SK-N-SH (cell line): ENCODE measurements at regions of chr11 and their contacts with region 1.

Region 1: DNA sequence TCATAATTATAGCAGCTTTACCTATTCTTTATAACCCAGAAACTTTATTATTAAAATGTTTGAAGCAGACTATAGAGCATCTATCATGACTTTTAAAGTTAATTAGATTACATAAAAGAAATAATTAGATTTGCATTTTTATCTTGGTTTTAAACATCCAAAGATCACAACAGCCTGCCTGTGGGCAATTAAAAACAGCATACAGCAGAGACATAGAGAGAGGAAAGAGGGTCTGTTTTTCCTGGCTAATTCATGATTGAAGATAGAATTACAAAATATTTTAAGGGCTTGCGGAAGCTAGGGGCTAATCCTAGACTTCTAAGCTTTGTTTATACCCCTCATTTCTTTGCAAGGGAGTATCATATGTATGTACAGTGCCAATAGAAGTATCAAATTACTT is 178.1 kb downstream of the SOX6 start:
- DNase-seq: peak; percentile 32
- H3K4me3 ChIP-seq: no peak overlapping the region
- H3K27ac ChIP-seq: peak overlapping the region in 1 of 2 experiments; percentile 69; a peak in 1 of 4 replicates
- H3K4me1 ChIP-seq: peaks cover 5 to 7% of the 10 kb centered on the region in 2 experiments; a peak in 3 of 4 replicates
- H3K27me3 ChIP-seq: no peaks in the 10 kb centered on the region
- CTCF ChIP-seq: no peak
- EP300 ChIP-seq: peak in 1 of 2 experiments; percentile 88; a peak in 2 of 4 replicates
- RAD21 ChIP-seq: 0 out of 2 replicates have a peak, but pooled peaks have one; percentile 28

Region 2: DNA sequence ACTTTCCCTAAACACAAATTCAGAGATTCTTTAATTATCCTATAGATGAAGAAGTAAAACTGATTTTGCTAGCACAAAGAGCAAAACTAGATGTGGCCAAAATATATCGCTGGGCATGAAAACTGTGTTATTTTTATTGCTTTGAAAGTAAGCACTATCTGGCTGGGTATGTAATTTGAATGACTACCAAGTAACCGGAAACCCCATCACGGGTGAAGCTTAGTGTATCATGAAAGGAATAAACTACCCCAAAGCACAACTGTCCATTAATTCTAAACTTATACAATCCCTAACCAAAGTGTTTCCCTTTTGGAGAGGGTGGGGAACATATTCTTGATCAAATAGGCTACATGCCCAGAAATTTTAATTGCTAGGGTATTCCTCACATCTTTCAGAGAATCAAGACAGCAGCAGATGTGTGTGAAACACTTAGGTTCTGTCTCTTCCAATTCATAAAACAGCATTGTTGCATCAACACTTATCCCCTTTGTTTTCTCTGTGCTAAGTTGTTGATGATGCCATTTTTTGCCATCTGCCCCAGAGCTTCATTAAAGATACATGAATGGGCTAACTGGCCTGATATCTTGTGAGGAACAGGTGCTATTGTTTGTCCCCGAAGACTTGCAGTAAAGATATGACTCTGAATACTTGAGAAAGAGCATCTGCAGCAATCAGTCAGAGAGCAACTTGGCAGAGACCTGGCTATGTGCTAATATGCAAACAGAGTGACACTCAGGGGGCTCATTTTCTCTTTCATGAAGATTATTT is 60.1 kb before region 1 on chr11:
- CTCF ChIA-PET with region 1: no interaction called
- POLR2A ChIA-PET with region 1: no interaction called
- DNase-seq: no peak
- H3K4me3 ChIP-seq: no peak overlapping the region
- H3K27ac ChIP-seq: no peak overlapping the region
- H3K4me1 ChIP-seq: peaks cover 0 to 3% of the 10 kb centered on the region in 2 experiments; a peak in 1 of 4 replicates
- H3K27me3 ChIP-seq: no peaks in the 10 kb centered on the region
- CTCF ChIP-seq: no peak
- EP300 ChIP-seq: no peak
- RAD21 ChIP-seq: no peak

Region 3: GRCh38 chr11:16155448-16155847 is 22.8 kb before region 1 on chr11:
- CTCF ChIA-PET with region 1: no interaction called
- POLR2A ChIA-PET with region 1: no interaction called
- DNase-seq: no peak
- H3K4me3 ChIP-seq: no peak overlapping the region
- H3K27ac ChIP-seq: no peak overlapping the region
- H3K4me1 ChIP-seq: peaks cover 0 to 4% of the 10 kb centered on the region in 2 experiments; a peak in 3 of 4 replicates
- H3K27me3 ChIP-seq: no peaks in the 10 kb centered on the region
- CTCF ChIP-seq: no peak
- EP300 ChIP-seq: no peak
- RAD21 ChIP-seq: no peak

Region 4: DNA sequence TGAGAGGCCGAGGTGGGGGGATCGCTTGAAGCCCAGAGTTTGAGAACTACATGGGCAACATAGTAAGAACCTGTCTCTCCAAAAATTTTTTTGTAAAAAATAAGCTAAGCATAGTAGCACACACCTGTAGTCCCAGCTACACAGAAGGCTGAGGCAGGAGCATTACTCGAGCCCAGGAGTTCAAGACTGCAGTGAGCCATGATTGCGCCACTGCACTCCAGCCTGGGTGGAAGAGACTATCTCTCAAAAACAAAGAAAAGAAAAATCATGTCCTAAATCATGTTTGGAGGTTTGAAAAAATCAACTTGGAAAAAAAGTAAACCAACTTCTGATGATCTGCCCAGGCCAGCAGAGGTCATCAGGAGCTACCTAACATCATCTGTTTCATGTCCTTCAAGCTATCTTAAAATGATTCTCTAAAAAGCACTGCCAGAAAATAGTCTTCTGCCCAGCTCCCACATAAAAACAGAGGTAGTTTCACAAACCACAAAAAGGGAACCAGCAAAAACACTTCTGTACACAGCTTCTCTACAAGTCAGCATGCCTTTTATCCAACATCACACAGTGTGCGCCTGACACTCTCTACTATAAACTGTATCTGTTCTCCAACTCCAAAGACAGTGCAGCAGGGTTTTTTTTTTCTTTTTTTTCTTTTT is 13.1 kb after region 1 on chr11:
- CTCF ChIA-PET with region 1: interaction called, 11 read pairs
- POLR2A ChIA-PET with region 1: no interaction called
- DNase-seq: no peak
- H3K4me3 ChIP-seq: no peak overlapping the region
- H3K27ac ChIP-seq: no peak overlapping the region; a peak in 1 of 4 replicates
- H3K4me1 ChIP-seq: peaks cover 0 to 5% of the 10 kb centered on the region in 2 experiments; a peak in 2 of 4 replicates
- H3K27me3 ChIP-seq: no peaks in the 10 kb centered on the region
- CTCF ChIP-seq: peak; percentile 21; the same call in 1 of the 2 replicates
- EP300 ChIP-seq: no peak
- RAD21 ChIP-seq: peak; percentile 36; the same call in 1 of the 2 replicates

Region 5: GRCh38 chr11:16204261-16204660 is 26.0 kb after region 1 on chr11:
- CTCF ChIA-PET with region 1: no interaction called
- POLR2A ChIA-PET with region 1: no interaction called
- DNase-seq: no peak
- H3K4me3 ChIP-seq: no peak overlapping the region
- H3K27ac ChIP-seq: no peak overlapping the region
- H3K4me1 ChIP-seq: no peaks in the 10 kb centered on the region
- H3K27me3 ChIP-seq: no peaks in the 10 kb centered on the region
- CTCF ChIP-seq: no peak
- EP300 ChIP-seq: no peak
- RAD21 ChIP-seq: no peak